H1 (cell line): ENCODE measurements at regions of chr1 and their contacts with region 1.

Region 1: DNA sequence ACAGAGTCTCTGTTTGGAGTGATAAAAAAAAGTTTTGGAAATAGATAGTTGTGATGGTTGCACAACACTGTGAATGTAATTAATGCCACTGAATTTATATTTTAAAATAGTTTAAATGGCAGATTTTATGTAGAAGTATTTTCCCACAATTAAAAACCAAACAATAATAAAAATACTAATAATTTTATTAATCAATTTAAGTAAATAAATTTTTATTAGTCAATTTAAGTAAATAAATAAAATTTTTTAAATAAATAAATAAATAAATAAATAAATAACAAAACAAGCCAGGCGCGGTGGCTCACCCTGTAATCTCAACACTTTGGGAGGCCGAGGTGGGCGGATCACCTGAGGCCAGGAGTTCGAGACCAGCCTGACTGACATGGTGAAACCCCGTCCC is 4.9 kb upstream of the KDF1 start:
- DNase-seq: no peak
- H3K4me3 ChIP-seq: no peak overlapping the region
- H3K27ac ChIP-seq: no peak overlapping the region
- H3K4me1 ChIP-seq: peaks cover 0 to 3% (median 0%) of the 10 kb centered on the region in 4 experiments; a peak in 3 of 7 replicates
- H3K27me3 ChIP-seq: no peaks in the 10 kb centered on the region
- CTCF ChIP-seq: no peak
- EP300 ChIP-seq: no peak
- POLR2A ChIP-seq: no peak
- RAD21 ChIP-seq: no peak

Region 2: DNA sequence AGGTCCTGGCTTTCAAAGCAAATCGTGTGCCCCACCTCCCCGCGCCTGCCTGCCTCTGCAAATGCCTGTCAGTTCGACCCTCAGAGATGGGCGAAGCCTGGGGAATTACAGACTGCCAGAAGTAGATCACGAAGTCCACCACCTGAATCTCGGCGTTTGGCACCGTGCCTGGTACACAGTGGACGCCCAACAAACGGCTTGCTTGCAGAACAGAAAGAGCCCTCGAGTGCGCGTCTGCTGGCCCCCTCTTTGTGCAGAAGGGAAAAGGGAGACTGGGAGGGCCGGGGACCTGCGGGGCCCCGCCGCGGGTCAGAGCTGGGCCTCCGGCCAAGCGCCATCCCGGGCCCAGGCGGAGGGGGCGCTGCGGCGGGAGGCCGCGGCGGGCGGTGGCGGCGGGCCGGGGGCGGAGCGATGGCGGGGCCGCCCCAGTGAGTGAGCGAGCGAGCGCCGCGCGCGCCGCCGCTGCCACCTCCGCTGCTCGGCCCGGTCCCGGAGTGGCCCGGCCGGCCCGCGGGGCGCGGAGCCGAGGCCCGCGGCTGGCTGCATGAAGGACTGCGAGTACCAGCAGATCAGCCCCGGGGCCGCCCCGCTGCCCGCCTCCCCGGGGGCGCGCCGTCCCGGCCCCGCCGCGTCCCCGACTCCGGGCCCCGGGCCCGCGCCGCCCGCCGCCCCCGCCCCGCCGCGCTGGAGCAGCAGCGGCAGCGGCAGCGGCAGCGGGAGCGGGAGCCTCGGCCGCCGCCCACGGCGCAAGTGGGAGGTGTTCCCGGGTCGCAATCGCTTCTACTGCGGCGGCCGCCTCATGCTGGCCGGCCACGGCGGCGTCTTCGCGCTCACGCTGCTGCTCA is 138.7 kb before region 1 on chr1 and contains the start of gene ZDHHC18:
- CTCF ChIA-PET with region 1: no interaction called
- POLR2A ChIA-PET with region 1: no interaction called
- DNase-seq: peak in 1 of 2 experiments; percentile 86
- H3K4me3 ChIP-seq: peak within 1 kb of the TSS; percentile 53 to 76 (median 56)
- H3K27ac ChIP-seq: no peak within 1 kb of the TSS
- H3K4me1 ChIP-seq: peaks cover 6 to 9% (median 7%) of the 10 kb centered on the region in 4 experiments; a peak in 6 of 7 replicates
- H3K27me3 ChIP-seq: no peaks in the 10 kb centered on the region
- CTCF ChIP-seq: peak; percentile 55 to 68 (median 65)
- EP300 ChIP-seq: no peak
- POLR2A ChIP-seq: peak in 1 of 2 experiments; percentile 34; a peak in 1 of 3 replicates
- RAD21 ChIP-seq: peak in 1 of 2 experiments; percentile 0; a peak in 2 of 4 replicates
- total RNA-seq, gene ZDHHC18: 29.2 and 29.7 TPM in 2 replicates

Region 3: DNA sequence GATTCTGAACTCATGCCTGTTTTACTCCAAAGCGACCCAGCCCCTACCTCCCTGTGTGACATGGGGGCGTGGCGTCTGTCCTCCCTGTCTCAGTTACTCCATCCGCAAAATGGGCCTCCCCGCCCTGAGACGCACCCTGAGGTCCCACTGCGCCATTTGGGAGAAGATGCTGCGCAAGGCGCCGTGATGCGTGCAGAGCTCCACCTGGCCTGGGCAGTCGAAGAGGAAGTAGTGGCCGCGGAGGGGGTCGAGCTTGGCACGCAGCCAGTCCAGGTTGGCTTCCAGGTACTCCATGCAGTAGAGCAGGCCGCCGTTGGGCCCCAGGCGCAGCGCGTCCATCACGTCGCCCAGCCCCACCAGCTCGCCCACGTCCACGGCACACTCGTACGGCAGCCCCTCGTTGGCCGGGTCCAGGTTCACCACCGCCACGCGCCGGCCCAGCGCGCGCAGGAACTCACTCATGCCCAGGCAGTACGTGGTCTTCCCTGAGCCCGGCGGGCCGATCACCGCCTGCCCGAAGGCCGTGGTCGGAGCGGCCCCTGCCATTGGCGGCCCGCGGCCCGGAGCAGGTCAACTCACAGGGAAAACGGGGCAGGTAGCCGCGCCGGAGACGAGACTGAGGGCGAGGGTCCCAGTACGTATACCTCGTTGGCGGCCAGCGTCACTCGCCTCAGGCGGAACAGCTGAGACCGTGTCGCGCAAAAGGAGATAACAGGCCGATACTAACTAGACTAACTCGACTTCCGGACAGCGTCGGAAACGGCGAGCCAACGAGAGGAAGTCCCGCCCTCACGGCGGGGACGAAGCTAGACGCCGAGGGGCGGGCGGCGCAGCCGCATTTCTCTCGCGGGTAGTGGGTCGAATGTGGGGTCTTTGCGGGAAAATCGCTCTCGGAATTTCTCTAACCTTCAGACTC is 75.4 kb before region 1 on chr1 and contains the start of gene GPN2:
- CTCF ChIA-PET with region 1: no interaction called
- POLR2A ChIA-PET with region 1: no interaction called
- DNase-seq: peak in 1 of 2 experiments; percentile 85
- H3K4me3 ChIP-seq: peak within 1 kb of the TSS; percentile 77 to 80 (median 80)
- H3K27ac ChIP-seq: peak within 1 kb of the TSS; percentile 58
- H3K4me1 ChIP-seq: peaks cover 0 to 8% (median 3%) of the 10 kb centered on the region in 4 experiments; a peak in 3 of 7 replicates
- H3K27me3 ChIP-seq: no peaks in the 10 kb centered on the region
- CTCF ChIP-seq: no peak
- EP300 ChIP-seq: no peak
- POLR2A ChIP-seq: peak; percentile 74 to 84
- RAD21 ChIP-seq: no peak
- total RNA-seq, gene GPN2: 29.6 and 36.8 TPM in 2 replicates

Region 4: GRCh38 chr1:26986658-26987057 is 21.4 kb after region 1 on chr1:
- CTCF ChIA-PET with region 1: interaction called, 130 read pairs
- POLR2A ChIA-PET with region 1: interaction called, 158 read pairs
- DNase-seq: no peak
- H3K4me3 ChIP-seq: no peak overlapping the region
- H3K27ac ChIP-seq: no peak overlapping the region
- H3K4me1 ChIP-seq: peaks cover 0 to 7% (median 3%) of the 10 kb centered on the region in 4 experiments; a peak in 4 of 7 replicates
- H3K27me3 ChIP-seq: no peaks in the 10 kb centered on the region; a peak in 1 of 7 replicates
- CTCF ChIP-seq: no peak
- EP300 ChIP-seq: no peak
- POLR2A ChIP-seq: no peak
- RAD21 ChIP-seq: no peak